ENCODE measurements at regions of chr2 and their contacts with region 1.

Region 1: GRCh38 chr2:151182899-151183809 is 78.5 kb downstream of the RBM43 start:
- DNase-seq: no peak
- ATAC-seq: no peak
- H3K4me3 ChIP-seq: no peak overlapping the region
- H3K27ac ChIP-seq: no peak overlapping the region
- H3K4me1 ChIP-seq: no peaks in the 10 kb centered on the region
- H3K27me3 ChIP-seq: no peaks in the 10 kb centered on the region
- CTCF ChIP-seq: no peak

Region 2: GRCh38 chr2:149648282-149649030 is 1534.7 kb before region 1 on chr2:
- CTCF ChIA-PET with region 1: no interaction called
- POLR2A ChIA-PET with region 1: interaction called, 11 read pairs
- in situ Hi-C with region 1: no loop called
- intact Hi-C with region 1: no loop called
- DNase-seq: peak; percentile 33
- ATAC-seq: 0 out of 2 replicates have a peak, but pooled peaks have one; percentile 48
- H3K4me3 ChIP-seq: no peak overlapping the region
- H3K27ac ChIP-seq: no peak overlapping the region; the same call in 1 of the 2 replicates
- H3K4me1 ChIP-seq: peaks cover 12% of the 10 kb centered on the region; the same call in 1 of the 2 replicates
- H3K27me3 ChIP-seq: no peaks in the 10 kb centered on the region
- CTCF ChIP-seq: no peak

Region 3: GRCh38 chr2:151071382-151071781 is 111.8 kb before region 1 on chr2:
- CTCF ChIA-PET with region 1: no interaction called
- POLR2A ChIA-PET with region 1: interaction called, 10 read pairs
- in situ Hi-C with region 1: no loop called
- intact Hi-C with region 1: no loop called
- DNase-seq: no peak
- ATAC-seq: no peak
- H3K4me3 ChIP-seq: no peak overlapping the region
- H3K27ac ChIP-seq: no peak overlapping the region
- H3K4me1 ChIP-seq: no peaks in the 10 kb centered on the region
- H3K27me3 ChIP-seq: no peaks in the 10 kb centered on the region
- CTCF ChIP-seq: peak; percentile 36